CD8-positive, alpha-beta T cell (primary cell): ENCODE measurements at regions of chr7 and their contacts with region 1.

Region 1: GRCh38 chr7:134954197-134955082 is 31.9 kb upstream of the AGBL3 start:
- DNase-seq: peak in 2 of 9 experiments; percentile 43 to 64
- ATAC-seq: no peak
- H3K4me3 ChIP-seq: no peak overlapping the region
- H3K4me3 Mint-ChIP-seq: no peak overlapping the region
- H3K27ac ChIP-seq: no peak overlapping the region
- H3K27ac Mint-ChIP-seq: no peak overlapping the region
- H3K4me1 ChIP-seq: no peaks in the 10 kb centered on the region
- H3K4me1 Mint-ChIP-seq: no peaks in the 10 kb centered on the region
- H3K27me3 ChIP-seq: no peaks in the 10 kb centered on the region
- H3K27me3 Mint-ChIP-seq: peaks cover 2% of the 10 kb centered on the region
- CTCF ChIP-seq: peak; percentile 74

Region 2: GRCh38 chr7:134514663-134515062 is 439.8 kb before region 1 on chr7:
- CTCF ChIA-PET with region 1: no interaction called
- POLR2A ChIA-PET with region 1: no interaction called
- intact Hi-C with region 1: loop called in 1 of 2 experiments (anchors 5 kb)
- DNase-seq: peak in 3 of 9 experiments; percentile 33 to 75 (median 70)
- ATAC-seq: peak; percentile 57
- H3K4me3 ChIP-seq: no peak overlapping the region
- H3K4me3 Mint-ChIP-seq: no peak overlapping the region
- H3K27ac ChIP-seq: no peak overlapping the region
- H3K27ac Mint-ChIP-seq: no peak overlapping the region
- H3K4me1 ChIP-seq: no peaks in the 10 kb centered on the region
- H3K4me1 Mint-ChIP-seq: peaks cover 4% of the 10 kb centered on the region
- H3K27me3 ChIP-seq: peaks cover 0 to 2% of the 10 kb centered on the region in 2 experiments
- H3K27me3 Mint-ChIP-seq: peaks cover 3% of the 10 kb centered on the region
- CTCF ChIP-seq: peak; percentile 88

Region 3: DNA sequence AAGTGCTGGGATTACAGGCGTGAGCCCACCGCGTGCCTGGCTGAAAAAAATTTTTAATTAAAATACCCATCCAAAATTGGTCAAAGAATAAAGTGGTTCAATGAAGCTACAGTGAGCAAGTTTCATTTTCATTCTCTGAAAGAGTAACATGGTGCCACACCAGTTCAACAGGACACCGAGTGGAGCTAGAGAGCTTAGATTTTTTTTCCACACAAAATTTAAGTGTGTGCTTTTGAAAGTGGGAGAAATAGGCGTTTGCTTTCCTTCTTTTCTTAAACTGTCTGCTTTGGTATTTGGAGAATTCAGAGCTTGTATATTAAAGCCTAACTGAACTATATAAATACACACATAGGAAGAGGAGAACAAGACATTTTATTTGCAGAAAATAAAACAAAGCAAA is 264.4 kb before region 1 on chr7:
- CTCF ChIA-PET with region 1: interaction called, 6 read pairs
- POLR2A ChIA-PET with region 1: no interaction called
- intact Hi-C with region 1: loop called (anchors 2 to 5 kb)
- DNase-seq: no peak
- ATAC-seq: no peak
- H3K4me3 ChIP-seq: no peak overlapping the region
- H3K4me3 Mint-ChIP-seq: no peak overlapping the region
- H3K27ac ChIP-seq: no peak overlapping the region
- H3K27ac Mint-ChIP-seq: no peak overlapping the region
- H3K4me1 ChIP-seq: peaks cover 4% of the 10 kb centered on the region
- H3K4me1 Mint-ChIP-seq: peaks cover 9% of the 10 kb centered on the region
- H3K27me3 ChIP-seq: no peaks in the 10 kb centered on the region
- H3K27me3 Mint-ChIP-seq: peaks cover 13% of the 10 kb centered on the region
- CTCF ChIP-seq: no peak

Region 4: DNA sequence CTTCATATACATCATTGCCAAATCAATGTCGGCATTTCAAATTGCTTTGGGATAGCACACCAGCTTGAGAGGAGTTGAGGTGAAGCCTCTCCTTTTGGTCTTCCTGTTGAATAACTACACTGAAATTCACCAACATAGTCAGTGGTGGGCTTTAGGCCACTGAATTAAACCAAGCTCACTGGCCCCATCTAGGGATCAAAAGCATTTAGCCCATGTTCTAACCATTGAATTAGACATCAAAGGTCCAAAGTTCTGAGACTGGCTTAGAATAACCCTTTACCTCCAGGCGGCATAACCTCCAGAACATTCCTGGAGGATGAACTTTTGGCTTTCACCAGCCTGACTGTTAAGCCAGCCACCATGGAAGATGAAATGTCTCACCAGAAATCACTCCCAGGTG is 253.2 kb before region 1 on chr7:
- CTCF ChIA-PET with region 1: interaction called, 3 read pairs
- POLR2A ChIA-PET with region 1: no interaction called
- intact Hi-C with region 1: loop called in 1 of 2 experiments (anchors 5 kb)
- DNase-seq: peak in 7 of 9 experiments; percentile 4 to 67 (median 38)
- ATAC-seq: peak; percentile 62
- H3K4me3 ChIP-seq: no peak overlapping the region
- H3K4me3 Mint-ChIP-seq: no peak overlapping the region
- H3K27ac ChIP-seq: no peak overlapping the region
- H3K27ac Mint-ChIP-seq: no peak overlapping the region
- H3K4me1 ChIP-seq: no peaks in the 10 kb centered on the region
- H3K4me1 Mint-ChIP-seq: no peaks in the 10 kb centered on the region
- H3K27me3 ChIP-seq: no peaks in the 10 kb centered on the region
- H3K27me3 Mint-ChIP-seq: no peaks in the 10 kb centered on the region
- CTCF ChIP-seq: peak; percentile 32

Region 5: DNA sequence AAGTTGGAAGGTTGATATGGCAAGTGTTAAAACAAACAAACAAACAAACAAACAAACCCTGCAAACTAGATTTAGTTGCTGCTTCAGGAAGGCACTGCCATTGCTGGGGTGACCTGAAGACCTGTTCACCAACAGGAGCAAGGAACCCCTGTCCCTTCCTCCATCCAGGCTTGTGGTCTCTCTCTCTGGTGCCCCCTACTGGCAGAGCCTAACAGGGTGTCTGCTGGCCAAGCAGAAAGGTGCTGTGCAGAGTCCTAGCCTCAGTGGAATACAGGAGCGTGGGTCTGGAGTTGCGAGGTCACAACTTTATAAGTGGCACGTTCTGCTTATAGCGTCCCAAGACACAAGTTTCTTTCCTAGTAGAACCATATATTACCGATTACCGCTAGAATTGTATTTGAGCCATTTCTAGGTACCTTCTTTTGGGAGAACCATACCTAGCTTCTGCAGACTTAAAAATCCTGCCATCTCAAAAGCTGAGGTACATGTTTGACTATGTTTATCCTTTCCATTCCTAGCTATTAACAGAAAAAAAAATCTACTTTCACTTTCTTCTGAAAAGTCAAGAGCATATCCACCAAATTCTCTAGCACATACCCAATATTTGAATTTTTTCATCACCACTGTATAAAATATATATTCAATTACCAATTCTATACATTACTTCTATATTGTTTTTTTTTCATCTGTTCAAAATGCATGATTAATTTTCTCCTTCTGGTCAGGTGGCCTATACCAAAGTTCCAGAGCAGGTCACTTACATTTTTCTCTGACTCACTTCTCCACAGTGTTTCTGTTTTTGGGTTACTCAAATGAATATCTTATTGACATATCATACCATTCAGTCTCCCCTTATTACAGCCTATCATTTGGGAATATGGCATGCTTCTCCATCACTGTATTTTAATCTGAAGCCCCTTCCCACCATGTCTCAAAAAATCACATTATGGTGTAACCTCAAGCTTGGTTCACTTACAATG is 204.1 kb before region 1 on chr7:
- CTCF ChIA-PET with region 1: interaction called, 4 read pairs
- POLR2A ChIA-PET with region 1: no interaction called
- intact Hi-C with region 1: loop called in 1 of 2 experiments (anchors 5 kb)
- DNase-seq: peak; percentile 24 to 77 (median 68)
- ATAC-seq: peak; percentile 64
- H3K4me3 ChIP-seq: no peak overlapping the region
- H3K4me3 Mint-ChIP-seq: no peak overlapping the region
- H3K27ac ChIP-seq: no peak overlapping the region
- H3K27ac Mint-ChIP-seq: no peak overlapping the region
- H3K4me1 ChIP-seq: no peaks in the 10 kb centered on the region
- H3K4me1 Mint-ChIP-seq: no peaks in the 10 kb centered on the region
- H3K27me3 ChIP-seq: no peaks in the 10 kb centered on the region
- H3K27me3 Mint-ChIP-seq: peaks cover 4% of the 10 kb centered on the region
- CTCF ChIP-seq: peak; percentile 63

Region 6: GRCh38 chr7:134845468-134845867 is 109.0 kb before region 1 on chr7:
- CTCF ChIA-PET with region 1: no interaction called
- POLR2A ChIA-PET with region 1: no interaction called
- intact Hi-C with region 1: no loop called
- DNase-seq: peak in 2 of 9 experiments; percentile 4 to 14
- ATAC-seq: no peak
- H3K4me3 ChIP-seq: no peak overlapping the region
- H3K4me3 Mint-ChIP-seq: no peak overlapping the region
- H3K27ac ChIP-seq: no peak overlapping the region
- H3K27ac Mint-ChIP-seq: no peak overlapping the region
- H3K4me1 ChIP-seq: no peaks in the 10 kb centered on the region
- H3K4me1 Mint-ChIP-seq: no peaks in the 10 kb centered on the region
- H3K27me3 ChIP-seq: no peaks in the 10 kb centered on the region
- H3K27me3 Mint-ChIP-seq: no peaks in the 10 kb centered on the region
- CTCF ChIP-seq: no peak